Naive thymus-derived CD4-positive, alpha-beta T cell (primary cell): ENCODE measurements at regions of chr1 and their contacts with region 1.

Region 1: DNA sequence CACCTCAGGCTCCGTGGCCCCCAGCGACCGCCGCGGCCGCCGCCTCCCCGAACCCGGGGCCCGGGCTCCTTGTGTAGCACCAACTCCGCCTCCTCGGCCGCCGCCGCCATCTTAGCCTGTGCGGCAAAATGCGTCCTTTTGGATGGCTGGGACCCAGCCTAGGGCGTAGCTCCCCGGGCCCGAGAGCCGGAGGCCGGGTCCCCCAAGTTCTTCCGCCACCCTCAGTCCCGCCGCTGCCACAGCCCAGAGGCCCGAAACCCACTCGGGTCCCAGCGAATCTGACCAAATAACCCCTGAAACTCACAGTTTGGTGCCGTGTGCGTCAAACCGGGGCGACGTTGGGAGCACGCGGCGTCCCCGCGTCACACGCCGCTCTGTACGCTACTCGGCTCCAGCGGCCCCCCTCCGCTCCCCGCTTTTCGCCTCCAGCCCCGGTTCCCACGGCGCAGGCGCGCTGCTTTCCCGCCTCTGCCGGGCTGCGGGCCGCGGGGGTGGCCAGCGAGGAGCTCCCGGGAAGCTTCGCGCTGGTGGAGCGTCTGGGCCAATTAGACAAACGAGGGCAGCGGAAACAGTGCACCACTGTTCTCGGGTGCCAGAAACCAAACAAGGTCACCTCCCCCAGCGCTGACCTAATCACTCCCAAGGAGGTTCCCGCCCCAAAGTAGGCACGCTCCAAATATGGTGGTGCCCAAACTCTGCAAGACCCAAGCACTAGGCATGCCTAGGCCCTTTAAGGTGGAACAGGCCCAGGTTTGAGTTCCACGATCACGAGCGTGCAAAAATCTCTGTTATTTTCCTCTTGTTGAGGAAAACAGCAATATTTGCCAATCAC is at the start of gene ZNF644:
- DNase-seq: peak; percentile 81 to 95 (median 93)
- ATAC-seq: peak; percentile 91
- H3K4me3 ChIP-seq: peak within 1 kb of the TSS; percentile 62
- H3K4me3 Mint-ChIP-seq: peak within 1 kb of the TSS; percentile 90 to 97 (median 96)
- H3K27ac ChIP-seq: peak within 1 kb of the TSS; percentile 99
- H3K27ac Mint-ChIP-seq: peak within 1 kb of the TSS; percentile 95 to 100 (median 98)
- H3K4me1 ChIP-seq: peaks cover 37 to 45% of the 10 kb centered on the region in 2 donors
- H3K4me1 Mint-ChIP-seq: peaks cover 37 to 83% (median 68%) of the 10 kb centered on the region in 7 donors
- H3K27me3 ChIP-seq: no peaks in the 10 kb centered on the region
- H3K27me3 Mint-ChIP-seq: peaks cover 0 to 2% (median 0%) of the 10 kb centered on the region in 5 donors
- total RNA-seq, gene ZNF644: 63.5 to 117 (median 85.2) TPM

Region 2: GRCh38 chr1:90721210-90722194 is 300.4 kb before region 1 on chr1:
- CTCF ChIA-PET with region 1: interaction called, 4 read pairs
- POLR2A ChIA-PET with region 1: no interaction called
- intact Hi-C with region 1: loop called (anchors 2 to 5 kb)
- DNase-seq: peak in 1 of 9 donors; percentile 54
- ATAC-seq: peak; percentile 58
- H3K4me3 ChIP-seq: no peak overlapping the region
- H3K4me3 Mint-ChIP-seq: peak overlapping the region in 8 of 10 donors; percentile 1 to 53 (median 28)
- H3K27ac ChIP-seq: no peak overlapping the region
- H3K27ac Mint-ChIP-seq: peak overlapping the region in 4 of 9 donors; percentile 13 to 65 (median 40)
- H3K4me1 ChIP-seq: peaks cover 5 to 30% of the 10 kb centered on the region in 2 donors
- H3K4me1 Mint-ChIP-seq: peaks cover 23 to 76% (median 61%) of the 10 kb centered on the region in 7 donors
- H3K27me3 ChIP-seq: peaks cover 31 to 85% of the 10 kb centered on the region in 2 donors
- H3K27me3 Mint-ChIP-seq: peaks cover 84 to 91% (median 85%) of the 10 kb centered on the region in 5 donors

Region 3: DNA sequence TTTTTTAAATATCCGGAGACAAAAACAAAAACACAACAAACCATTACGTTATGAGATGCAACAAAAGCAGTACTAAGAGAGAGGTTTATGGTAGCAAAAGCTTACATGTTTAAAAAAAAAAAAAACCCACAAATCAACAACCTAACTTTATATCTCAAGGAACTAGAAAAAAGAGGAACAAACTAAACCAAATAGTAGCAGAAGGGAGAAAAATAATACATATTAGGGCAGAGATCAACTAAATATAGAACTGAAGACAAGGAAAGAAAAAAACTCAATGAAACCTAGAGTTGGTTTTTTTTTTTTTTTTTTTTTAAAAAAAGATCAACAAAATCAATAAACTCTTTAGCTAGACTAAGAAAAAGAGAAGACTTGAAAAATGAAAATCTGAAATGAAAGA is 34.9 kb before region 1 on chr1:
- CTCF ChIA-PET with region 1: no interaction called
- POLR2A ChIA-PET with region 1: no interaction called
- intact Hi-C with region 1: loop called in 1 of 2 experiments (anchors 5 kb)
- DNase-seq: no peak
- ATAC-seq: no peak
- H3K4me3 ChIP-seq: no peak overlapping the region
- H3K4me3 Mint-ChIP-seq: peak overlapping the region in 6 of 10 donors; percentile 3 to 56 (median 37)
- H3K27ac ChIP-seq: no peak overlapping the region
- H3K27ac Mint-ChIP-seq: peak overlapping the region in 3 of 9 donors; percentile 12 to 33 (median 15)
- H3K4me1 ChIP-seq: peaks cover 0 to 5% of the 10 kb centered on the region in 2 donors
- H3K4me1 Mint-ChIP-seq: peaks cover 18 to 89% (median 81%) of the 10 kb centered on the region in 7 donors
- H3K27me3 ChIP-seq: no peaks in the 10 kb centered on the region
- H3K27me3 Mint-ChIP-seq: no peaks in the 10 kb centered on the region

Region 4: DNA sequence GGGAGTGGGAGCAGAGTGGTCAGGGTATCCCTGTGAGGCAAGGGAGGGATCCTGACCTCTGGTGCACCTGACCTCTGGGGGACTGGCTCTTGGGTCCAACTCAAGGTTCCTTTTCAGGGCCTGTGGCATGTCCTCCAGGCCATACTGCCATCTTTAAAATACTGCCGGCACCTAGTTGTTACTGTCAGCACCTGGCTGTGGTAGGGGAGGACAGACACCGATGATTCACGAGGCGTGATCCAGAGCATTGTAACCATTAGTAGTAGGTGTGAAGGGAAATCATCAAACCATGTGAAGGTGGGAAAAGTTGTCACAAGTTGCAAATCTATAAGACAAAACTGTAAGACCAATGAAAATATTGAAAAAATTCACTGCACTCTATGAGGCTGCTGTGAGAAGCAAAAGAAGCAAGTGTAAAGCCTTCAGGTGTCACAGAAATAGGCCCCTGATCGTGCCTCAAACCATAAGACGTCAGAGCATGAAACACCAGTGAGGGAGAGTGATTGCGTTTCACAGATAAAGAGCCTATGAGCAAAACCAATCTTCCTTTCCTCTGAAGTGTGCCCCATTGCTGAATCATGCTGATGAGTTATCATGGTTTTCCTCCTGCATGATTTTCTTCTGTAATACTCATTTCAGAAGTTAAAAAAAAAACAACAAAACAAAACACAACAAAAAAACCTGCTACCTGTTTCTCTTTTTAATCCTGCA is 534.1 kb after region 1 on chr1:
- CTCF ChIA-PET with region 1: no interaction called
- POLR2A ChIA-PET with region 1: no interaction called
- intact Hi-C with region 1: loop called in 1 of 2 experiments (anchors 1 kb)
- DNase-seq: peak in 8 of 9 donors; percentile 56 to 86 (median 76)
- ATAC-seq: peak; percentile 93
- H3K4me3 ChIP-seq: no peak overlapping the region
- H3K4me3 Mint-ChIP-seq: peak overlapping the region in 7 of 10 donors; percentile 12 to 63 (median 45)
- H3K27ac ChIP-seq: peak overlapping the region; percentile 29
- H3K27ac Mint-ChIP-seq: peak overlapping the region; percentile 50 to 97 (median 85)
- H3K4me1 ChIP-seq: peaks cover 35 to 94% of the 10 kb centered on the region in 2 donors
- H3K4me1 Mint-ChIP-seq: peaks cover 41 to 92% (median 57%) of the 10 kb centered on the region in 7 donors
- H3K27me3 ChIP-seq: no peaks in the 10 kb centered on the region
- H3K27me3 Mint-ChIP-seq: peaks cover 0 to 3% (median 0%) of the 10 kb centered on the region in 5 donors

Region 5: GRCh38 chr1:92583821-92584760 is 1562.2 kb after region 1 on chr1:
- CTCF ChIA-PET with region 1: no interaction called
- POLR2A ChIA-PET with region 1: no interaction called
- intact Hi-C with region 1: loop called in 1 of 2 experiments (anchors 5 kb)
- DNase-seq: peak in 7 of 9 donors; percentile 50 to 82 (median 76)
- ATAC-seq: peak; percentile 93
- H3K4me3 ChIP-seq: peak overlapping the region; percentile 30
- H3K4me3 Mint-ChIP-seq: peak overlapping the region; percentile 25 to 88 (median 68)
- H3K27ac ChIP-seq: peak overlapping the region; percentile 47
- H3K27ac Mint-ChIP-seq: peak overlapping the region; percentile 41 to 93 (median 86)
- H3K4me1 ChIP-seq: peaks cover 27 to 38% of the 10 kb centered on the region in 2 donors
- H3K4me1 Mint-ChIP-seq: peaks cover 22 to 66% (median 63%) of the 10 kb centered on the region in 7 donors
- H3K27me3 ChIP-seq: no peaks in the 10 kb centered on the region
- H3K27me3 Mint-ChIP-seq: no peaks in the 10 kb centered on the region